AG04449 (cell line): ENCODE measurements at regions of chr22 and their contacts with region 1.

Region 1: DNA sequence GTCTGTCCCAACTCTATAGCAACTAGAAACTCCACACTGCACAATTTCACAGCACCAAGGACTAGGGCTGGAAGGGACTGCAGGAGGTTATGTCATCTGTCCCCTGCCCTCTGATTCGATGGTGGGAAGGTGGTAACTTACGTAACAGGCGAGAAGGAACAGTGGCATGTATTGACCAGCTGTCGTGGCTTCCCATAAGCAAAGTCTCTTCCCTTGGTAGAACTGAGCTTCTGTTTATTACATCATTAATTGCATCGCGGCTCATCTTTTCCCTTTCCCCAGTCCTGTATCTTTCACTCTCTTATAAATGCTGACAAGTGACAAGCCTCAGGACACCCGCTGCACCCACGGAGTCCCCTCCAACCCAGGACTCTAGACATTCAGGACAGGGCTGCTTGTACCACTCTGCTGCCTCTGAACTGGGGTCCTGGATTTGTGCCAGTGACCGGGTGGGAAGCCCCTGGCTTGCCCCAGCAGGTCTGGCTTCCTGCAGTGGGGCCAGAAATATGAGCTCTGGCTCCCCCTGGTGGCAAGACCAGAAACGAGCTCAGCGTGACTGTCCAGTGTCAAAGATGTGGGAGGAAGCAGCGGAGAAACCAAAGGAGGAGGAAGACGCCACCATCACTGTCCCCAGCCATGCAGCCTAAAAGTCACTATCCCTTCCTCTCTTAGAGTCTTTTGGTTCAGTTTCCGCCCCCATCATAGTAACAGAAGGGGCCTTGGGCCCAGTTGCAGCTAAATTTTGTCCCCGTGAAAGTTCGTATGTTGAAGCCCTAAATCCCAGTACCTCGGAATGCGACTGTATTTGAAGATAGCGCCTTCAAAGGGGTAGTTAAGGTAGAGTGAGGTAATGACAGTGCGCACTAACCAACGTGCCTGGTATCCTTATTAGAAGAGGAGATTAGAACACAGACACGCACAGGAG is 84.5 kb downstream of the ISX start:
- DNase-seq: no peak
- H3K4me3 ChIP-seq: no peak overlapping the region
- CTCF ChIP-seq: peak; percentile 76

Region 2: DNA sequence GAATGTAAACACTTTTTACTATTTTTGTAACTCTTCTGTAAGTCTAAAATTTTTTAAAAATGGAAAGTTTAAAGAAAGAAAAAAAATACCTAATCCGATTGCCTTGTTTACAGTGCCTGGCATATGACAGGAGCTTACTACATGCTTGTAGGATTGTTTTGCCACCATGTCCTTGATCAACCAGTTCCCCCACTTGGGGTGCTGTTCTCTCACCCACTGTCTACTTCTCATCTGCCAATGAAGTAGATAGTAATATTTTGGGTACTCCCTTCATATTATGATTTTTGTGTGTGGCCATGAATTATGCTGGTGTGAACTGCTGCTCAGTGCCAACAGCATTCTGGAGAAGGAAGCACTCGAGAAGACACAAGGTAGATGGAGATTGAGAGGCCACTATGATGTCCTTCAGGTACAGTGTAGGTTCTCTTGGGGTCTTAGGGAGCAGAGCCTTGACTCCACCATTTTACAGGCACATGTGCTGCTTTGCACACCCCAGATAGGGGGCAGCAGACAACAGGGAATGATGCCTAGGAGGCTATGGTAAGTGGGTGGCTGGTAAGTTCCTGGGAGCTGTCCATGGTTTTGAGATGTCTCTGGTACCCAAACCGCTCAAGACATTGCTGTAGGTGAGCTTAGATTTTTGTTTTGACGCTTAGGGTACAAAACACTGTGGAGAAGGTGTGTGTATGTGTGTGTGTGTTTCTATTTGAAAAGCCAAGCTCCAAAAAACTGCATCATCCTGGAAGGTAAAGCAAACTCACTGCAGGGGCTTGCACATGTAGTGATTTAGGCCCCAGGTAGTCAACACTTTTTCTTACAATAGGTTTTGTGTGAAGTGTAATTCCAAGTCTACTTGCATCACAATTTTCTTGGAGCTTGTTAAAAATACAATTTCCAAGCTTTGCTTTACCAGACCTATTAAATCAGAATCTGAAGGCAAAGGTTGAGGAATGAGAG is 735.7 kb before region 1 on chr22:
- CTCF ChIA-PET with region 1: interaction called, 21 read pairs
- POLR2A ChIA-PET with region 1: no interaction called
- DNase-seq: no peak
- H3K4me3 ChIP-seq: no peak overlapping the region
- CTCF ChIP-seq: peak; percentile 34

Region 3: DNA sequence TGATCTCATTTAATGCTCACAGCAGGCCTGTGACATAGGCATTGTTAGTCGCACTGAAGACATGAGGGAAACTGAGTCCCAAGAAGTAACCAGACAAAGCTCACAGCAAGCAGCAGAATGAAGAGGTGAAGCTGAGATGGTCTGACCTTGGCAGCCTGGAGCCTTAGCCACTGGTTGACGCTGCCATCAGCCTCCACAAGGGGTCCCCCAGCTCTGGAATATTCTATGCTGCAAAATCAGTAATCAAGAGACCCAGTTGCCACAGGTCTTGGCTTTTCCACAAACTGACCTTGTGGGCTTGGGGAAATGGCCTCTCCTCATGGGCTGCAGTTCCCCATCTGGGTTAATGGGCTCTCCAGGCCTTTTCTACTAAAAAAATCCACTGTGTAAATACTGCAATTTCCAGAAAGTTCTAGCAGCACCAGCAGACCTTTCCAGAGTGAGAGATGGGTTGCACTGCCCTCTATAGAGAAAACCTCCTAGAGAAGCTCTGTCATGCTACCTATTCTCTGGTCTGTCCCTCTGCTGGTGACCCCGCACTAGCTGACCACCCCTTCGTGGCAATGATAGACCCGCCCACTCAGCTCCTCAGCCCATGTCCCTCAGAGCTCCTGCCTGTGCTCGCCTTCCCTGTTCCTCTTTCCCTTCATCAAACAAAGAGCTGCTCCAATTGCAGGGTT is 107.1 kb before region 1 on chr22:
- CTCF ChIA-PET with region 1: interaction called, 20 read pairs
- POLR2A ChIA-PET with region 1: no interaction called
- DNase-seq: no peak
- H3K4me3 ChIP-seq: no peak overlapping the region
- CTCF ChIP-seq: peak; percentile 43

Region 4: DNA sequence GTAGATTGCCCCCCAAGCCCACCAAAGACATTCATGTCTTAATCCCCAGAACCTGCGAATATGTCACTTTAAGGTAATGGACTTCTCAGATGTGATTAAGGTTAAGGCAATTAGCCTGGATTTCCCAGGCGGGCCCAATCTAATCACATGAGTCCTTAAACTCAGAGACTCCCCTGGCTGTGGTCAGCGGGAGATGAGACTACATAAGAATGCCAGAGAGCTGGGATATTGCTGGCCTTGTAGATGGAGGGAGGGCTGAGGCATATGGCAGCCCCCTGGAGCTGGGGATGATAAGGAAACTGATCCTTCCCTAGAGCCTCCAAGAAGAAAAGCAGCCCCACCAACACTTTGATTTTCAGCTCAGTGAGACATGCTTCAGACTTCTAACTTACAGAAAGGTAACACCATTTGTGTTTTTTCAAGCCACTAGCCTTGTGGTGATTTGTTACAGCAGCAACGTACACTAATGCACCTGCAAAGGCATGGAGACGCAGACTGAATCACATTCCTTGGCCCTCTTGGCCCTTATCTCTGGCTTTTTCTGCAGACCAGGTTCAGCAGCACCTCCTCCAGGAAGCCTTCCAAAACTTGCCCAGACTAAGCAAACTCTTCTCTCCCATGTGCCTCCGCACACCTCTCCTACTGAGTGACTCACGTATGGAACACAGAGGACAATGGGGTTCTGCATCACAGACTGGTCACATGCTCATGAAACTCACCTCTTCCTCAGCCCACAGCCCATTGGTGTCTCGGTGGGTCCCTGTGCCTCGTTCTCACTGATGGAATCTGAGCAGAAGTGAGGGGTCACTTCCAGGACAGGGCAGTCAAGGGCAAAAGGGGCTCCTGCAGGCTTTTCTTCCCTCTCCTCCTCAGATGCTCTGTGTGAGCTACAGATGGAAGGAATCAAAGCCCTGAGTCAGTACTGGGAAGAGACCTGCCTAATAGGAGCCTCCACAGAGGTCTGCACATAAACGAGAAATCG is 20.6 kb after region 1 on chr22:
- CTCF ChIA-PET with region 1: interaction called, 13 read pairs
- POLR2A ChIA-PET with region 1: no interaction called
- DNase-seq: no peak
- H3K4me3 ChIP-seq: no peak overlapping the region
- CTCF ChIP-seq: no peak

Region 5: GRCh38 chr22:35231585-35232084 is 81.2 kb after region 1 on chr22:
- CTCF ChIA-PET with region 1: interaction called, 35 read pairs
- POLR2A ChIA-PET with region 1: no interaction called
- DNase-seq: no peak
- H3K4me3 ChIP-seq: no peak overlapping the region
- CTCF ChIP-seq: peak; percentile 87